ENCODE measurements at regions of chr5 and their contacts with region 1.

Region 1: DNA sequence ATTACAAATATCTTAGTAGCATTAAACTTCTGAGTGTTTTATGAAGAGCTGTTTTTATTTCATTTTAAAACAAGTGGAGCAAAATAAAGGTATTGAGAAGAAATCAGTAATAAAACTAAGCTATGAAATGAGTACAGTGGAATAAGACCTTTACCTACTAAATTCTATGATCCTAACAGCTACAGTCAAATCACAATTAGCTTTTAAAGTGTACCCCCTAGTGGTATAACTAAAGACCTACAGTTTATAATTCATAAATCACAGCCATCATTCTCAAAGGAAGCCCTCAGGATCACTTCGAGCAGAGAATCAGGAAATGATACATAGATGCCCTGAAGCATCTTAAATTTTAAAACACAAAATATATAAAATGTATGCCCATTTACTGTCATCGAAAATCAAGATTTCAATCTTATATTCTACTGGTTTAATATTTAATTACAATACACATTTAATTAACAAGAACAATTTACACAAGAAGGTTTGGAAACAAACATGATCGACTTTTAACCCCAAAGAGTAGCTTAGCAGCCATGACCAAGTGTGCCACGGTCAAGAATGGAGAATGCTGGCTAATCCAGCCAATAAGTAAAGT is 12.3 kb downstream of the CCNH start:
- DNase-seq: no peak
- H3K4me3 Mint-ChIP-seq: no peak overlapping the region
- H3K27ac Mint-ChIP-seq: no peak overlapping the region
- H3K4me1 Mint-ChIP-seq: peaks cover 15% of the 10 kb centered on the region
- H3K27me3 Mint-ChIP-seq: no peaks in the 10 kb centered on the region
- CTCF ChIP-seq: peak; percentile 55

Region 2: GRCh38 chr5:86880785-86881492 is 519.5 kb before region 1 on chr5:
- CTCF ChIA-PET with region 1: no interaction called
- intact Hi-C with region 1: loop called (anchors 5 kb)
- DNase-seq: peak; percentile 80
- H3K4me3 Mint-ChIP-seq: no peak overlapping the region
- H3K27ac Mint-ChIP-seq: no peak overlapping the region
- H3K4me1 Mint-ChIP-seq: peaks cover 9% of the 10 kb centered on the region
- H3K27me3 Mint-ChIP-seq: no peaks in the 10 kb centered on the region
- CTCF ChIP-seq: peak; percentile 91

Region 3: GRCh38 chr5:86986837-86987236 is 413.6 kb before region 1 on chr5:
- CTCF ChIA-PET with region 1: interaction called, 7 read pairs
- intact Hi-C with region 1: loop called (anchors 2 kb)
- DNase-seq: no peak
- H3K4me3 Mint-ChIP-seq: no peak overlapping the region
- H3K27ac Mint-ChIP-seq: no peak overlapping the region
- H3K4me1 Mint-ChIP-seq: no peaks in the 10 kb centered on the region
- H3K27me3 Mint-ChIP-seq: no peaks in the 10 kb centered on the region
- CTCF ChIP-seq: no peak

Region 4: DNA sequence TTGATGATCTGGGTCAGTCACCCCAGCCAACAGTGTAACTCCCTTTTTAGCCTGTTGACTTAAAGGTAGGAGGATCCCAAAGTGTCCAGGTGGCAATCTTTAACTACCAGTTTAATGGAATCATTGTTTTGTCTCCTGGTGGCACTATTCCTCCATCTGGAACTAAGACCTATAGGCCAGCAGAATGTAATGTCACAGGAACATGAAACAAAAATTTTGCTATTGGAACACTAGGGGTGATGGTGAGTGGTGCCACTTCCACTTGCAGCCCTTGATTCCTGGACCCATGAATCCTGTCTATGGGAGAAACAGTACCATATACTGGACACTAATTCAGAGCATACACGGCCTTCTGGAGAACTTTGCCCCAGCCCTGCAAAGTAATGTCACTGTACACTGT is 352.2 kb before region 1 on chr5:
- CTCF ChIA-PET with region 1: no interaction called
- intact Hi-C with region 1: loop called (anchors 5 kb)
- DNase-seq: peak; percentile 31
- H3K4me3 Mint-ChIP-seq: no peak overlapping the region
- H3K27ac Mint-ChIP-seq: peak overlapping the region; percentile 90
- H3K4me1 Mint-ChIP-seq: peaks cover 36% of the 10 kb centered on the region
- H3K27me3 Mint-ChIP-seq: no peaks in the 10 kb centered on the region
- CTCF ChIP-seq: peak; percentile 19

Region 5: GRCh38 chr5:87579678-87580077 is 179.3 kb after region 1 on chr5:
- CTCF ChIA-PET with region 1: no interaction called
- intact Hi-C with region 1: no loop called
- DNase-seq: no peak
- H3K4me3 Mint-ChIP-seq: no peak overlapping the region
- H3K27ac Mint-ChIP-seq: no peak overlapping the region
- H3K4me1 Mint-ChIP-seq: peaks cover 7% of the 10 kb centered on the region
- H3K27me3 Mint-ChIP-seq: no peaks in the 10 kb centered on the region
- CTCF ChIP-seq: no peak